Activated CD4-positive, alpha-beta T cell treated with anti-CD3 and anti-CD28 coated beads for 36 hours (primary cell): ENCODE measurements at regions of chr10 and their contacts with region 1.

Region 1: GRCh38 chr10:5813287-5814109 is at the start of gene GDI2:
- DNase-seq: peak; percentile 98
- ATAC-seq: peak; percentile 94
- H3K4me3 Mint-ChIP-seq: peak within 1 kb of the TSS; percentile 92
- H3K27ac Mint-ChIP-seq: peak within 1 kb of the TSS; percentile 98
- H3K4me1 Mint-ChIP-seq: peaks cover 60% of the 10 kb centered on the region
- H3K27me3 Mint-ChIP-seq: no peaks in the 10 kb centered on the region
- total RNA-seq, gene GDI2: 276 to 290 TPM

Region 2: GRCh38 chr10:5719546-5719945 is 94.0 kb before region 1 on chr10:
- CTCF ChIA-PET with region 1: no interaction called
- POLR2A ChIA-PET with region 1: no interaction called
- intact Hi-C with region 1: no loop called
- DNase-seq: no peak
- ATAC-seq: no peak
- H3K4me3 Mint-ChIP-seq: no peak overlapping the region
- H3K27ac Mint-ChIP-seq: no peak overlapping the region
- H3K4me1 Mint-ChIP-seq: peaks cover 25% of the 10 kb centered on the region
- H3K27me3 Mint-ChIP-seq: no peaks in the 10 kb centered on the region

Region 3: GRCh38 chr10:5776136-5776880 is 37.2 kb before region 1 on chr10:
- CTCF ChIA-PET with region 1: interaction called, 3 read pairs
- POLR2A ChIA-PET with region 1: no interaction called
- intact Hi-C with region 1: loop called (anchors 2 to 5 kb)
- DNase-seq: no peak
- ATAC-seq: peak; percentile 17
- H3K4me3 Mint-ChIP-seq: peak overlapping the region; percentile 47
- H3K27ac Mint-ChIP-seq: peak overlapping the region; percentile 87
- H3K4me1 Mint-ChIP-seq: peaks cover 53% of the 10 kb centered on the region
- H3K27me3 Mint-ChIP-seq: no peaks in the 10 kb centered on the region

Region 4: GRCh38 chr10:5889624-5890451 is 76.3 kb after region 1 on chr10 and contains the starts of genes ANKRD16 and FBH1:
- CTCF ChIA-PET with region 1: interaction called, 4 read pairs
- POLR2A ChIA-PET with region 1: interaction called, 13 read pairs
- intact Hi-C with region 1: loop called (anchors 1 to 2 kb)
- DNase-seq: peak; percentile 99
- ATAC-seq: peak; percentile 87
- H3K4me3 Mint-ChIP-seq: peak within 1 kb of the TSS; percentile 90
- H3K27ac Mint-ChIP-seq: peak within 1 kb of the TSS; percentile 84
- H3K4me1 Mint-ChIP-seq: peaks cover 53% of the 10 kb centered on the region
- H3K27me3 Mint-ChIP-seq: no peaks in the 10 kb centered on the region
- total RNA-seq, gene ANKRD16: 7.5 to 8.3 TPM
- total RNA-seq, gene FBH1: 53.3 to 56.2 TPM

Region 5: DNA sequence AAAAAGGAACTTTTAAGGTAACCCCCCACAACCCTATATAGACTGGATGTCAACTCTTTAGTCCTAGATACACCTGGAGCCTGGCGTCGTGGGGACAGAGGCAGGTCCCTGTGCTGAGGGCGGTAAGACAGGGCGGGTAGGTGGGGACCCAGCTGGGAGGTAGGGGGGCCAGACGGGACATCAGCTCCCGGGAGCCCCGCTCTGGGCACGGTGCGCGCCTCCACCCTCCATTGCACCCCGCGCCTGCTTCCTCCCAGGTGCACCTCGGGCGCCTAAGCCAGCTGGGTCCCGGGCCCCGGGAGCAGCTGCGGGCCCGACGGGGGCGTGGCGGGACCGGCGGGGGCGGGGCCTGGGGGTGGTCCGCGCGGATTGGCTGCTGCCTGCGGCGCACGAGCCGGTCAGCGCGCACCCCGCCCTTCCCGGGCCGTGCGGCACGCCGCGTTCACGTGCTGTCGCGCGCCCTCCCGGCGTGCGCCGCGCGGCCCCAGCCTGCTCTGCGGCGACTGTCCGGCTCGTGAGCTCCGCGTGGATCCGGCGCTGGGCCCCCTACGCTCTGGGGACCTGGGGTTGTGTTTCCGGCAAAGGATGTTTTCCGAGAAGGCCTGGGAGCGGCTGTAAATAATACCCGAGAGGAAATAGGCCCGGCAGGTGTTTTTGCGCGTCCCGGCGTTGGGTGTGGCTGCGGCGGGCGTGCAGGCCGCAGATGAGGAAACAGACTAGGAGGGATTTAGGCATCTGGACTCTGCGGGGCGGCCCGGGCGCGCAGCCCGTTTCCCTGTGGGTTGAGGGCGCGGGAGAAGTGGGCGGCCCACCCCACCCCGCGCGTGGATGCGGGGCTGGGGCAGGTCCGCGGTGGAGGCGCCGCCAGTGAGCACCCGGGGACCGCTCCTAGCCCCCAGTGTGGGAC is 350.1 kb after region 1 on chr10:
- CTCF ChIA-PET with region 1: no interaction called
- POLR2A ChIA-PET with region 1: no interaction called
- intact Hi-C with region 1: loop called in 1 of 2 experiments (anchors 1 kb)
- DNase-seq: peak; percentile 94
- ATAC-seq: peak; percentile 92
- H3K4me3 Mint-ChIP-seq: peak overlapping the region; percentile 92
- H3K27ac Mint-ChIP-seq: peak overlapping the region; percentile 95
- H3K4me1 Mint-ChIP-seq: peaks cover 67% of the 10 kb centered on the region
- H3K27me3 Mint-ChIP-seq: no peaks in the 10 kb centered on the region

Region 6: DNA sequence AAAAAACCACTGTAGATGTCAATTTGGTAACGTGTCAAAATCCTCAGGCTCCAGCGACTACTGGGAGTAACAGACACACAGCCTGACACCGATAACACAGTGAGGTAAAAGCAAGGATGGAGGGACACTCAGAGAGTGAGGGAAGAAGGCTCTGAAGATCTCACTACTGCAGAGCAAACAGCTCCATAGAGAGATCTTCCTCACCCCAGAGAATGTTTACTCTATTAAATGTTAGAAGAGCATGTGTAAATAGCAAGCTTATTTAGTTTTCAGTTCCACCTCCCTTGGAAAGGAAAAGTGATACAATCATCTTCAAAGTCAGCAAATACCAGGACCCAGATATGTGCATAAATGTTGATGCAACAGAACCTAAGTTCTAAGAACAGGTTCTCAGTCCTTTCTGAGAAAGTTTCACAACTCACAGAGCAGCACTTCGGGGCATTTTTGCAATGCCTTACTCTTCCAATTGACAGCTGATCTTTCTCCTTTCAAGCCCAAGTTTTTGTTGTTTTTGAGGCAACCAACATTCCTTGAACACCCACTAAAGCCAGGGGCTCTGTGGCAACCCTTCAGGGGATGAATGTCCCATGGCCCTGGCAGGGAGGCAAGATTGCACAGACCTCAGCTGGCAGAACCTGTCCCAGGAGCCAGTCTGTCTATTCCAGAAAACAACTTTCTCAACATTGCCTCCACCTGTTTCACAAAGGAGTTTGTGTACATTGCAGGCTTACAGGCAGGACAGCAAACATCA is 1419.9 kb after region 1 on chr10:
- CTCF ChIA-PET with region 1: no interaction called
- POLR2A ChIA-PET with region 1: no interaction called
- intact Hi-C with region 1: no loop called
- DNase-seq: no peak
- ATAC-seq: no peak
- H3K4me3 Mint-ChIP-seq: no peak overlapping the region
- H3K27ac Mint-ChIP-seq: no peak overlapping the region
- H3K4me1 Mint-ChIP-seq: peaks cover 14% of the 10 kb centered on the region
- H3K27me3 Mint-ChIP-seq: peaks cover 3% of the 10 kb centered on the region